PC-9 (cell line): ENCODE measurements at regions of chr14 and their contacts with region 1.

Region 1: GRCh38 chr14:21917699-21918436 is 244.2 kb upstream of the OR4E1 start:
- DNase-seq: peak; percentile 37 to 93
- H3K4me3 ChIP-seq: no peak overlapping the region
- H3K27ac ChIP-seq: peak overlapping the region; percentile 58
- H3K4me1 ChIP-seq: peaks cover 47% of the 10 kb centered on the region
- H3K27me3 ChIP-seq: no peaks in the 10 kb centered on the region
- CTCF ChIP-seq: peak; percentile 80

Region 2: GRCh38 chr14:21557084-21557901 is 360.6 kb before region 1 on chr14:
- CTCF ChIA-PET with region 1: no interaction called
- POLR2A ChIA-PET with region 1: no interaction called
- intact Hi-C with region 1: no loop called
- DNase-seq: peak; percentile 57 to 77
- H3K4me3 ChIP-seq: peak overlapping the region; percentile 6; the same call in 1 of the 2 replicates
- H3K27ac ChIP-seq: no peak overlapping the region
- H3K4me1 ChIP-seq: no peaks in the 10 kb centered on the region; the same call in 1 of the 2 replicates
- H3K27me3 ChIP-seq: no peaks in the 10 kb centered on the region
- CTCF ChIP-seq: peak; percentile 79

Region 3: GRCh38 chr14:21933681-21934080 is 15.8 kb after region 1 on chr14:
- CTCF ChIA-PET with region 1: no interaction called
- POLR2A ChIA-PET with region 1: no interaction called
- intact Hi-C with region 1: loop called (anchors 2 kb)
- DNase-seq: peak in 1 of 2 experiments; percentile 34
- H3K4me3 ChIP-seq: no peak overlapping the region
- H3K27ac ChIP-seq: no peak overlapping the region
- H3K4me1 ChIP-seq: no peaks in the 10 kb centered on the region
- H3K27me3 ChIP-seq: no peaks in the 10 kb centered on the region
- CTCF ChIP-seq: peak; percentile 57